Gastrocnemius medialis (tissue), 4 donors: ENCODE measurements at regions of chr3 and their contacts with region 1.

Region 1: GRCh38 chr3:73502609-73503583 is 121.8 kb downstream of the PDZRN3 start:
- DNase-seq: peak; percentile 42 to 61
- ATAC-seq: peak; percentile 61 to 72
- H3K4me3 ChIP-seq: no peak overlapping the region
- H3K27ac ChIP-seq: peak overlapping the region; percentile 75 to 84 (median 76)
- H3K4me1 ChIP-seq: peaks cover 36 to 38% of the 10 kb centered on the region in 2 donors
- H3K27me3 ChIP-seq: no peaks in the 10 kb centered on the region
- CTCF ChIP-seq: peak; percentile 69 to 87 (median 82)
- POLR2A ChIP-seq: no peak

Region 2: DNA sequence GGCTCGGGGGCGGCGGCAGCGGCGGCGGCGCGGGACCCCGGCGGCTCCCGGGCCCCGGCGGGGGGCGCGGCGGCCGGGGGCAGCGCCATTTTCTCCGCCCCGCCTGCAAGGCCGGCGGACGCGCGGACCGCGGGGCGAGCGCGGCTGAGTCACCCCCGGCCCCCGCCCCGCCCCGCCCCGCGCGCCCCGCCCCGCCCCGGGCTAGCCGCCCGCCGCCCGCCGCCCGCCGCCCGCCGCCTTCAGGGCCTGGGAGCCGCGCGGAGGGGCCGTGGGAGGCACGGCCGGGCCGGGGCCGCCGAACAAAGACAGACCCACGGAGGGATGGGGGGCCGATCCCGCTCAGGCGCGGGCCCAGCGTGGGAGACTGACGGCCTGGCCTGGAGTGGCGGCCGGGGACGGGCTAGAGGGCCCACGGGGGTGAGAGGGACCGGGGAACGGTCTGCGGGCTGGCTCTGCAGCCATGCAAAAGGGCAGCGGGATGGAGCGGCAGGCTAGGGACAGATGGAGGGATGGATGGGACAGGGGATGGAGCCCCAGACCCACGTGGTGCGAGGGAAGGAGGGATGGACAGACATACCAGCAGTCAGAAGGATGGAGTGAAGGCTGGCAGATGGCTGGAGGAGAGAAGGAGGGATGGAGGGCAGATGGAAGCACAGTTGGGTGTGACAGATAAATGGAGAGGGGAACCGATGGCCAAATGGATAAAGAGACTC is 1777.5 kb before region 1 on chr3 and contains the start of gene EIF4E3:
- in situ Hi-C with region 1: no loop called
- intact Hi-C with region 1: loop called (anchors 10 kb)
- DNase-seq: peak in 1 of 2 donors; percentile 21
- ATAC-seq: peak; percentile 81 to 82
- H3K4me3 ChIP-seq: peak within 1 kb of the TSS; percentile 67 to 84 (median 78)
- H3K27ac ChIP-seq: peak within 1 kb of the TSS; percentile 76 to 87 (median 85)
- H3K4me1 ChIP-seq: peaks cover 21 to 26% of the 10 kb centered on the region in 2 donors
- H3K27me3 ChIP-seq: no peaks in the 10 kb centered on the region
- CTCF ChIP-seq: no peak
- POLR2A ChIP-seq: no peak
- total RNA-seq, gene EIF4E3: 25.0 to 51.0 (median 42.8) TPM

Region 3: DNA sequence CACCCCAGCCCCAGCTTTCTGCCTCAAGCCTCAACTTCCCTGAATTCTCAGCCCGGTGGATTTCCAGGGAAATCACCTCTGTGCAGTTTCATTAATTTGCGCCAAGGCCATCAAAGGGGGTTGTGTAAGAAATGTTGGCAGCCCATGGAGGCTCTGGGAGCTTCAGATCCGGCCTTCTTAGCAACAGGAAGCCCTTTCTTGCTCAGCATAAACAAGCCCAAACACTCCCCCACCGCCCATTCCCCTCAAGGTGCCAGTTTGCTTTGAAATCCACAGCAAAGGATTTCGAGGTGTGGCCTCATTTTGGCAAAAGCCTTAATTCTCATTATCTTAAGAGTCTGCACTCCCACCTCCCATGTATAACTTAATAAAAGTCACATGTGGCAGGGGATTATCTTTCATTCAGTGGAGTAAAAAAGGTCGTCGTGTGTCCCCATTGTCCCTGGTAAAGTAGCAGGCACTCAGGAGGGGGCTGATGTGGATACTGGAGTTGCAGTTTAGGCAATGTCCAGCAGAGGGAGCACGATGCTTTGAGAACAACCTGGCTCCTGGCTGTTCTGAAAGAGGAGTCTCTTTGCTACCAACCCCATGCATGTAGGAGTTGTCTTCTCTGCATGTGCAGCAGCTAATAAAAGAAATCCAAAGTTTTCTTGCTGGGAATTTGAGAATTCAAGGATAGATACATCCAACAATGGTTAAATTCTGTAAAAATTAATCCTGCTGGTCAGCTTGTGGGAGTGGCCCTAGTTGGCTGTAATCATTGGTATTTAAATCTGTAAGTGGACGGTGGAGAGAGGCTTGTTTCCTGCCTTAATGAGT is 401.9 kb before region 1 on chr3:
- in situ Hi-C with region 1: loop called (anchors 5 kb)
- intact Hi-C with region 1: loop called (anchors 1 kb)
- DNase-seq: peak; percentile 55 to 70
- ATAC-seq: peak; percentile 93
- H3K4me3 ChIP-seq: no peak overlapping the region
- H3K27ac ChIP-seq: no peak overlapping the region
- H3K4me1 ChIP-seq: no peaks in the 10 kb centered on the region
- H3K27me3 ChIP-seq: no peaks in the 10 kb centered on the region
- CTCF ChIP-seq: peak; percentile 81 to 93 (median 88)
- POLR2A ChIP-seq: no peak

Region 4: DNA sequence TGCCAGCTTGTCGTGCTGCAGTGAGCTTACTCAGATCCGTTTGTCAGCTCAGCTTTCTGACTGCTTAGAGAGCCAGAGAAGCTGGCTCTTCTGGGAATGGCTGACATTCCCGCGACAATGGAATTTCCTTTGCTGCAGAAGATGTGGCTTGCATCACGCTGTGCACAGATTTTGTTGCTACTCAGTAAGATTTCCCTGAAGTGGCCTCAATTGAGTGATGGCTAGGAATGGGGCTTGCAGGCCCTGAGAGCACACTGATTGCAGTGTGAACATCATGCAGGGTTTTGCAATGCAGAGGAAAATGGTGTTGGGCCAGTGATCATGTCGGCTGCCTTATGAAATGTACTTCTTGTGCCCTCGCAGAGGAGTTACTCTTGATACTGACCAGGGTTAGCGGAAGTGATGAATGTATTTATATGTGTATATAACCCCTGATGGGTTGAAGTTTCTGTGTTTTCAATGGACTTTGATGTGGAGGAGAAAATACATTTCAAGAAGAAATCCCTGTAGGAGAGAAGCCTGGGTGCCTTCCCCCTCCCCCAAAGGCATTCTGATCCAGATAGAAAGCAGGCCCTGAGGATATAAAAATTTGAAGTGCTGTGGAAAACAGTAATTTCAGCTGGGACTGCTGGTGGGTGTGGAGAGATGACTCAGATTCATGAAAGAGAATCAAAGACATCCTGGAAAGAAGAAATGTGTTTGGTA is 224.4 kb after region 1 on chr3:
- in situ Hi-C with region 1: loop called in 1 of 4 experiments (anchors 25 kb)
- intact Hi-C with region 1: no loop called
- DNase-seq: peak in 1 of 2 donors; percentile 40
- ATAC-seq: peak; percentile 46 to 49
- H3K4me3 ChIP-seq: no peak overlapping the region
- H3K27ac ChIP-seq: peak overlapping the region; percentile 32 to 54 (median 47)
- H3K4me1 ChIP-seq: peaks cover 19 to 27% of the 10 kb centered on the region in 2 donors
- H3K27me3 ChIP-seq: no peaks in the 10 kb centered on the region
- CTCF ChIP-seq: no peak
- POLR2A ChIP-seq: no peak

Region 5: DNA sequence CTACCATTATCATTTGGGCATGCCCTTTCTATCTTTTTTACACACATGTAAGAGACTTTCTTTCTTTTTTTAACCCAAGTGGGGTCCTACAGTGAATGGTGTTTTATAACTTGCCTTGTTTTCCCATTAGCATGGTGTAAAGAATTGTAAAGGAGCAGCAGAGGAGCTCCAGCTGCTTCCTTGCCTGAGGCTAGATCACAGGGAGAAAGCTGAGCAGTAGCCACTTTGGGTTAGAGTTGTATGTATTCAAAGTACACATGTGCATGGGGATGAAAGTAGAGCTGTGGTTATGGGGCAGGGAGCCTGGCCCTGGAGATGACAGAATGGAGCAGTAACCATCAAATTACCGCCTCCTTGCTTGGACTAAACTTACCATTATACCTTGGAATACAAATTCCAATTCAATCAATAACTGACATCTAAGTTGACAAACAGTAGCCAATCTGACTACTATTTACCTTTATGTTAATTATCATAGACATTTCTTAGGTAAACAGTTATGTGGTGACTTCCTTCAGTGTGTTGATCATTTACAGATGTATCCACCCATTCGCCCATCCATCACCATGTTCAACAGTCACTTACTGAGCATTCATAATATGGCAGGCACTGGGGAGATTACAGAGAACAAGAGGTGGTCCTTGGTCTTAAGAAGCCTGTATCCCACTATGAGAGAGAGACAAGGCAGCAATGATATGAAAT is 353.1 kb after region 1 on chr3:
- in situ Hi-C with region 1: loop called in 2 of 4 experiments (anchors 5 to 10 kb)
- intact Hi-C with region 1: no loop called
- DNase-seq: no peak
- ATAC-seq: no peak
- H3K4me3 ChIP-seq: no peak overlapping the region
- H3K27ac ChIP-seq: no peak overlapping the region
- H3K4me1 ChIP-seq: no peaks in the 10 kb centered on the region
- H3K27me3 ChIP-seq: no peaks in the 10 kb centered on the region
- CTCF ChIP-seq: no peak
- POLR2A ChIP-seq: no peak